ENCODE measurements at regions of chr19 and their contacts with region 1.

Region 1: GRCh38 chr19:40603389-40604135 is 2.4 kb downstream of the LTBP4 start:
- DNase-seq: peak; percentile 93
- H3K4me3 ChIP-seq: peak overlapping the region; percentile 45 to 52; a peak in 3 of 4 replicates
- H3K27ac ChIP-seq: peak overlapping the region in 1 of 2 experiments; percentile 39; a peak in 1 of 4 replicates
- H3K4me1 ChIP-seq: peaks cover 7 to 41% of the 10 kb centered on the region in 2 experiments; a peak in 2 of 4 replicates
- H3K27me3 ChIP-seq: no peaks in the 10 kb centered on the region
- CTCF ChIP-seq: no peak
- EP300 ChIP-seq: no peak
- RAD21 ChIP-seq: no peak

Region 2: GRCh38 chr19:40465557-40466150 is 137.9 kb before region 1 on chr19 and contains the start of gene BLVRB:
- CTCF ChIA-PET with region 1: interaction called, 25 read pairs
- POLR2A ChIA-PET with region 1: no interaction called
- DNase-seq: peak; percentile 97
- H3K4me3 ChIP-seq: peak within 1 kb of the TSS; percentile 61 to 79
- H3K27ac ChIP-seq: peak within 1 kb of the TSS; percentile 3 to 79; a peak in 3 of 4 replicates
- H3K4me1 ChIP-seq: peaks cover 5 to 17% of the 10 kb centered on the region in 2 experiments; a peak in 3 of 4 replicates
- H3K27me3 ChIP-seq: no peaks in the 10 kb centered on the region
- CTCF ChIP-seq: no peak
- EP300 ChIP-seq: no peak
- RAD21 ChIP-seq: no peak
- polyA plus RNA-seq, gene BLVRB: 69.7 and 85.9 TPM in 2 replicates

Region 3: GRCh38 chr19:40529093-40529954 is 74.2 kb before region 1 on chr19:
- CTCF ChIA-PET with region 1: interaction called, 16 read pairs
- POLR2A ChIA-PET with region 1: interaction called, 3 read pairs
- DNase-seq: peak; percentile 99
- H3K4me3 ChIP-seq: peak overlapping the region; percentile 44 to 60
- H3K27ac ChIP-seq: peak overlapping the region in 1 of 2 experiments; percentile 70; a peak in 2 of 4 replicates
- H3K4me1 ChIP-seq: peaks cover 0 to 11% of the 10 kb centered on the region in 2 experiments; a peak in 1 of 4 replicates
- H3K27me3 ChIP-seq: no peaks in the 10 kb centered on the region
- CTCF ChIP-seq: peak; percentile 79
- EP300 ChIP-seq: no peak
- RAD21 ChIP-seq: peak; percentile 51

Region 4: GRCh38 chr19:40542202-40542859 is 61.2 kb before region 1 on chr19:
- CTCF ChIA-PET with region 1: interaction called, 24 read pairs
- POLR2A ChIA-PET with region 1: interaction called, 3 read pairs
- DNase-seq: peak; percentile 60
- H3K4me3 ChIP-seq: no peak overlapping the region
- H3K27ac ChIP-seq: peak overlapping the region in 1 of 2 experiments; percentile 19; a peak in 1 of 4 replicates
- H3K4me1 ChIP-seq: peaks cover 0 to 13% of the 10 kb centered on the region in 2 experiments; a peak in 1 of 4 replicates
- H3K27me3 ChIP-seq: no peaks in the 10 kb centered on the region
- CTCF ChIP-seq: no peak
- EP300 ChIP-seq: no peak
- RAD21 ChIP-seq: no peak

Region 5: GRCh38 chr19:40549007-40549708 is 54.4 kb before region 1 on chr19:
- CTCF ChIA-PET with region 1: interaction called, 23 read pairs
- POLR2A ChIA-PET with region 1: no interaction called
- DNase-seq: peak; percentile 95
- H3K4me3 ChIP-seq: peak overlapping the region in 1 of 2 experiments; percentile 10; a peak in 2 of 4 replicates
- H3K27ac ChIP-seq: no peak overlapping the region
- H3K4me1 ChIP-seq: peaks cover 3 to 4% of the 10 kb centered on the region in 2 experiments; a peak in 1 of 4 replicates
- H3K27me3 ChIP-seq: no peaks in the 10 kb centered on the region
- CTCF ChIP-seq: peak; percentile 40
- EP300 ChIP-seq: no peak
- RAD21 ChIP-seq: peak; percentile 50

Region 6: GRCh38 chr19:40616941-40617340 is 13.4 kb after region 1 on chr19:
- CTCF ChIA-PET with region 1: interaction called, 11 read pairs
- POLR2A ChIA-PET with region 1: interaction called, 3 read pairs
- DNase-seq: no peak
- H3K4me3 ChIP-seq: no peak overlapping the region
- H3K27ac ChIP-seq: no peak overlapping the region
- H3K4me1 ChIP-seq: peaks cover 0 to 3% of the 10 kb centered on the region in 2 experiments; a peak in 1 of 4 replicates
- H3K27me3 ChIP-seq: no peaks in the 10 kb centered on the region
- CTCF ChIP-seq: no peak
- EP300 ChIP-seq: no peak
- RAD21 ChIP-seq: no peak